Naive thymus-derived CD4-positive, alpha-beta T cell (primary cell): ENCODE measurements at regions of chr12 and their contacts with region 1.

Region 1: GRCh38 chr12:1650260-1650977 is 21.4 kb downstream of the WNT5B start:
- DNase-seq: no peak
- ATAC-seq: no peak
- H3K4me3 ChIP-seq: no peak overlapping the region
- H3K4me3 Mint-ChIP-seq: no peak overlapping the region
- H3K27ac ChIP-seq: no peak overlapping the region
- H3K27ac Mint-ChIP-seq: peak overlapping the region in 1 of 9 donors; percentile 46
- H3K4me1 ChIP-seq: no peaks in the 10 kb centered on the region
- H3K4me1 Mint-ChIP-seq: peaks cover 0 to 6% (median 4%) of the 10 kb centered on the region in 7 donors
- H3K27me3 ChIP-seq: no peaks in the 10 kb centered on the region
- H3K27me3 Mint-ChIP-seq: peaks cover 4 to 44% (median 9%) of the 10 kb centered on the region in 5 donors

Region 2: DNA sequence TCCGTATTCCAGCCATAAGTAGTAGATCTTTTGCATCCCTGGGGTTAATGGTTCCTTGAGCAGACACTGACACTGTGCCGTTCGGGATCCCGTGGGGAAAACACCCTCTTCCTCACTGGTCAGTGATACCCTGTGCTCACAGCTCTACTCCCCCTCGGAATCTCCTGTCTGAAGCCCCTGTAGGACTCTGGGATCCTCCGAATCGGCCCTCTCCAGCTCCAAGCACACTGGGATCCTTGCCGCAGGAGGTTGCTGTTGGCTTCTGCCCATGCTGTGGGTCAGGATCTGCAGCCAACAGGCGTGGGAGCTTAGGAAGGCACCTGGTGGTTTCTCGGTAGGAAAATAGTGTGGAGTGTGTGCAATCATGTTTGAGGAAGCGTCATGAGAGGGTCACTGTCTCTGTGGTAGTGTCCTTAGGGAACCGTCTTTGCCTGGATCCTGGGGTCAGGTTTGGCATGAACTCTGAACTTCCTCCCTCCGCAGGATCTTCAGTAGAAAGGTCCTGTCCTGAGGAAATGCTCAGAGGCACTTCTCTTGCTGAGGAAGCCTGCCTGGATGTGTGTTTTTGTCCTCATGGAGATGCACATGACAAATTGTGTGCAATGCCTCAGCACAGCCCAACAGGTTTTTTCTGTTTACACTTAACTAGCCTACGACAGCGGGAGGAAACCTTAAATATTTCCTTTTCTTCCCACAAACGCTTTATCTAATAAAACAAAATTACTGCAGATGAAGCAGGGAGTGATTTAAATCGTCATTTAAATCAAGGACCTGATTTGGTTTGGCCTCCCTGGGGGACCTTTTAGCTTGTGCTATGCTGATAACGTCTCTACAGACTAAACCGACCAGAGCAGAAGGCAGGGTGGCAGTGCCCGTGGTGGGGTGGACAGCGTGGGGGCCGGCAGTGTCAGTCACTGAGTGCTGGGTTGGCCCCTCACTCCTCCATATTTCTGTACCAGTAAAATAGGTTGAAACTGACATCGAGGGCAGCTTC is 74.7 kb before region 1 on chr12:
- CTCF ChIA-PET with region 1: no interaction called
- POLR2A ChIA-PET with region 1: no interaction called
- intact Hi-C with region 1: no loop called
- DNase-seq: no peak
- ATAC-seq: no peak
- H3K4me3 ChIP-seq: no peak overlapping the region
- H3K4me3 Mint-ChIP-seq: no peak overlapping the region
- H3K27ac ChIP-seq: no peak overlapping the region
- H3K27ac Mint-ChIP-seq: peak overlapping the region in 1 of 9 donors; percentile 29
- H3K4me1 ChIP-seq: no peaks in the 10 kb centered on the region
- H3K4me1 Mint-ChIP-seq: peaks cover 0 to 17% (median 4%) of the 10 kb centered on the region in 7 donors
- H3K27me3 ChIP-seq: no peaks in the 10 kb centered on the region
- H3K27me3 Mint-ChIP-seq: peaks cover 0 to 4% (median 0%) of the 10 kb centered on the region in 5 donors

Region 3: DNA sequence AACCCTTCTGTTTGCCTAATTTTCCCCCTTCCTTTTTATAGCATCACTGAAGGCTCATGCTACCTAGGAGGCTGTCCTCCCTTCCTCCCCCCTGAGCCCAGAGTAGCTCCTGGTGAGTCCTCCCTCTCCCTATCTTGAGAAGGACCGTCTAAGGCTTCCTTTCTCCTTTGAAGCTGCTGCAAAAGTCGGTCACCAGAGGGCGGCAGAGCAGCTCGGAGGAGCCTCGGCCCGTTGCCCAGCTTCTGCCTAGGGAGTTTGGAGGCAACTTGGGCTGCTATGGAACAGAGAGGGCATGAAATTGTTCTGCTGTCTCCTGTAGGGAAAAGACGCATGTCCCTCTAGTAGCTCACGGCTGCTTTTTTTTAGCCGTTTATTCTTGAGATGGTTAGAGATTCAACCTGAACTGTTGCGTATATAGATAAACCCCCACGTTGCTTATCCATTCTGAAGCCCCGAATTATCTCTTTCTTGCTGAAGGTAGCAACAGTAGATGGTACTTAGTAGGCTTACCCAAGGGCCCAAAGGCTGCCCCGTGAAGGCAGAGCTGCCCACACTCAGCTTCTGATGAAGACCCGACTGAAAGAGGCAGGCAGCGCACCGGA is 15.7 kb before region 1 on chr12:
- CTCF ChIA-PET with region 1: interaction called, 4 read pairs
- POLR2A ChIA-PET with region 1: no interaction called
- intact Hi-C with region 1: loop called in 1 of 2 experiments (anchors 2 kb)
- DNase-seq: peak; percentile 21 to 59 (median 44)
- ATAC-seq: peak; percentile 71
- H3K4me3 ChIP-seq: no peak overlapping the region
- H3K4me3 Mint-ChIP-seq: no peak overlapping the region
- H3K27ac ChIP-seq: no peak overlapping the region
- H3K27ac Mint-ChIP-seq: no peak overlapping the region
- H3K4me1 ChIP-seq: peaks cover 0 to 8% of the 10 kb centered on the region in 2 donors
- H3K4me1 Mint-ChIP-seq: peaks cover 0 to 17% (median 13%) of the 10 kb centered on the region in 7 donors
- H3K27me3 ChIP-seq: peaks cover 0 to 4% of the 10 kb centered on the region in 2 donors
- H3K27me3 Mint-ChIP-seq: peaks cover 28 to 61% (median 33%) of the 10 kb centered on the region in 5 donors

Region 4: DNA sequence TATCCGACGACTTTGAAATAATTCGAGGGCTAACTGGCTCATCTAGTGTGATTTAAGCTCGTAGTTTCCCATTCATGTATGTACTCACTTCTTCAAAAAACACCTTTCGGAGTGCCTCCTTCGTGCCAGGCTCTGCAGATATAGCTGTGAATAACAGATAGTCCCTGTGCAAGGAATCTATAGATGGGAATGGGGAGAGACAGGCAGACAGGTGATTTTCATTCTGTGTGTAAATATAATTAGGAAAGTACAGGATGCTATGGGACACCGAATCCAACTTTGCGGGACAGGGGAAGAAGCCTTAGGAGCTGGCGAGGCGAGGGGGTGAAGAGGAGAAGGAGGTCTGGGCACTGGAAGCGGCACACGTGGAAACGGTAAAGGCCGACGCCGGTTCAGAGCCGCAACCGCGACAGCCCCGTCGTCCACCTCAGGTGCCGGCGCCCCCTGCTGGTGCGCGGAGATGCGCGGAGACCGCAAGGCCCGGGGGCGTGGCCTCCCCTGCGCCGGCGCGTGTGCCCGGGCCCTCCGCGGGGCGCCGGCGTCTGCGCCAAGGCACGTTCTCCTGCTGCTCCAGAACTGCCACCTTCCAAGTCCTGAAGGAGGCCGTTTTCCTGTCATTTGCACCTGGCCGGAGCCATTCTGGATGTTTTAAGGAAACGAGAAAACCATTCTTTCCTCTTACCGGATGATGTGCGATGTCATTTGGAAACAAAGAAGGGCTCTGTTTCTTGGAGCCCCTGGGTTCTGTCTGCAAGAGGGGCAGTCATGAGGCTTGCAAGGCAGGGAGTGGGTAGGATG is 384.4 kb after region 1 on chr12:
- CTCF ChIA-PET with region 1: no interaction called
- POLR2A ChIA-PET with region 1: no interaction called
- intact Hi-C with region 1: loop called in 1 of 2 experiments (anchors 10 kb)
- DNase-seq: peak; percentile 70 to 94 (median 83)
- ATAC-seq: peak; percentile 100
- H3K4me3 ChIP-seq: peak overlapping the region; percentile 64
- H3K4me3 Mint-ChIP-seq: peak overlapping the region; percentile 67 to 81 (median 74)
- H3K27ac ChIP-seq: no peak overlapping the region
- H3K27ac Mint-ChIP-seq: peak overlapping the region in 4 of 9 donors; percentile 6 to 85 (median 47)
- H3K4me1 ChIP-seq: peaks cover 0 to 4% of the 10 kb centered on the region in 2 donors
- H3K4me1 Mint-ChIP-seq: peaks cover 6 to 15% (median 13%) of the 10 kb centered on the region in 7 donors
- H3K27me3 ChIP-seq: peaks cover 0 to 4% of the 10 kb centered on the region in 2 donors
- H3K27me3 Mint-ChIP-seq: peaks cover 33 to 75% (median 36%) of the 10 kb centered on the region in 5 donors